Gastrocnemius medialis (tissue), 4 donors: ENCODE measurements at regions of chr13 and their contacts with region 1.

Region 1: DNA sequence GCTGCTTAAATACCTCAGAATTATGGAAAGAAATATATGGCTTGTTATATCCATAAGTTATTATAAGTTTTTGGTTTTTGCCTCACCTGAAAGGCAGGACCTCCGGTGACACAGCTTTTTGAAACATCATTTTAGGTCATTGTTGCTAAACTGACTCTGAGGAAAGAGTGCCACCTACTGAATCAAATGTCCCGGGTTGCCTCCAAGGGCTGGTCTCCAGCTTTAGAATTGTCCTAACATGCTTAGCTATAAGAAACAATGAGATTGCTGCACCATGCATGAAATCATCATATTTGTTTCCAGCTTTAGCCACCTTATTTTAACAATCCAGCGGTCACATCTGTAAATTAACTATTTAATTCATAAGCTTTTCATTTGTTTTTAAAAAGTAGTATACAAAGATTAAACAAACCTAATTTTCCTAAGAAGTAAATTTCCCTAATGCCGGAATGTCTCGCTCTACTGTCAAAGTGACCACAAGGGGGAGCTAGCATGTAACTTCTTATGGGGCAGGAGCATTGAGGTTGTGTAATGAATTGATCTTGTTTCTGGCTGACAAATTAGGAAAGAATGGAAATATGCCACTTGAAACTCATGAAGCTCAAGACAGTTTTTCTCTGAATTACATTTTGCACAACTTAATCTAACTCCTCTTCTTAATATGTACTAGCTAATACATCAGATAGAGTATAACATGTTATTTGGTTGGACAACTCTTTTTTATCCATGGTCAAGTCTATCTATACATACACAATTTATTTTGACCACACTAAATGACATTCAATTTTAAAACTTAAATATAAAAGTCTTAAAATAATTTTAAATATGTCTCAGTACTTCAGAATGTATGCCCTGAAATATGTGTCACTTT is 6.7 kb upstream of the PCDH17 start:
- DNase-seq: no peak
- ATAC-seq: no peak
- H3K4me3 ChIP-seq: no peak overlapping the region
- H3K27ac ChIP-seq: no peak overlapping the region
- H3K4me1 ChIP-seq: peaks cover 6 to 9% of the 10 kb centered on the region in 2 donors
- H3K27me3 ChIP-seq: peaks cover 12 to 26% (median 22%) of the 10 kb centered on the region in 3 donors
- CTCF ChIP-seq: peak in 3 of 5 experiments; percentile 26 to 63 (median 56)
- POLR2A ChIP-seq: no peak

Region 2: GRCh38 chr13:57409121-57409520 is 215.7 kb before region 1 on chr13:
- in situ Hi-C with region 1: no loop called
- intact Hi-C with region 1: no loop called
- DNase-seq: no peak
- ATAC-seq: no peak
- H3K4me3 ChIP-seq: no peak overlapping the region
- H3K27ac ChIP-seq: no peak overlapping the region
- H3K4me1 ChIP-seq: no peaks in the 10 kb centered on the region
- H3K27me3 ChIP-seq: no peaks in the 10 kb centered on the region
- CTCF ChIP-seq: no peak
- POLR2A ChIP-seq: no peak

Region 3: DNA sequence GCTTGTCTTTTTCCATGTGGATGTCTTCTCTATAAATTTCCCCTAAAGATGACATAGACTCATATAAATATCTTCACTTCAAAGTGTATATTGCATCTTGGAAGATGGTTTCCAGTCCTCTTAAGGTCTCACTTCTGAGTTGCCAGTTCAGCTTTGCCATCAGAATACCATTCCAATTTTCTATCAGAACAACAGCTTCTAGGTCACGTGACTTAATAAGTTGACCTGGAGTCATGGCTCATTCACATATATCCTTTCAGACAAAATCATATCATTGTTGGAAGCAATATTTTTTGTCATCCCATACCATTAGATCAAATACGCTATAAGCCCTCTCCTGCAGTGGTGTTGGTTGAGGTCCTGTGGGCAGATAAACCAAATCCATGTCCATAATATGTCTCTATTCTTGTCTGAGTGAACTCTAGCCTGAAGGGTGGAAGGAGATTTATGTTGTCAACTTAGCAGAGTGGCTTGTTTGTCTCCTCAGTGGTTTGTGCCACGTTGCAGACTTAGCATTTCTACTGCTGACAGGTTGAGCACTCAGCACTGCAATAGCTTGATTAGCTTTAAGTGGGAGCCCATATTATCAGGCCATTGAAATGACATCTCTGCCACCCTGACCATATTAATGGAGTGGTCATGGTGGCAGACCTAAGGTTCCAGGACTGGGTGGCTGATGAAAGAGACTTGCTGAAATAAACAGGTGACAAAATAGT is 116.9 kb before region 1 on chr13:
- in situ Hi-C with region 1: no loop called
- intact Hi-C with region 1: no loop called
- DNase-seq: no peak
- ATAC-seq: no peak
- H3K4me3 ChIP-seq: no peak overlapping the region
- H3K27ac ChIP-seq: no peak overlapping the region
- H3K4me1 ChIP-seq: no peaks in the 10 kb centered on the region
- H3K27me3 ChIP-seq: no peaks in the 10 kb centered on the region
- CTCF ChIP-seq: no peak
- POLR2A ChIP-seq: no peak

Region 4: GRCh38 chr13:58843567-58843966 is 1218.8 kb after region 1 on chr13:
- in situ Hi-C with region 1: no loop called
- intact Hi-C with region 1: no loop called
- DNase-seq: no peak
- ATAC-seq: no peak
- H3K4me3 ChIP-seq: no peak overlapping the region
- H3K27ac ChIP-seq: no peak overlapping the region
- H3K4me1 ChIP-seq: no peaks in the 10 kb centered on the region
- H3K27me3 ChIP-seq: no peaks in the 10 kb centered on the region
- CTCF ChIP-seq: no peak
- POLR2A ChIP-seq: no peak

Region 5: GRCh38 chr13:59318320-59318930 is 1693.6 kb after region 1 on chr13:
- in situ Hi-C with region 1: loop called in 1 of 4 experiments (anchors 25 kb)
- intact Hi-C with region 1: no loop called
- DNase-seq: peak; percentile 5 to 15
- ATAC-seq: no peak
- H3K4me3 ChIP-seq: no peak overlapping the region
- H3K27ac ChIP-seq: no peak overlapping the region
- H3K4me1 ChIP-seq: no peaks in the 10 kb centered on the region
- H3K27me3 ChIP-seq: no peaks in the 10 kb centered on the region
- CTCF ChIP-seq: peak in 3 of 5 experiments; percentile 23 to 66 (median 47)
- POLR2A ChIP-seq: no peak